HepG2 (cell line): ENCODE measurements at regions of chr4 and their contacts with region 1.

Region 1: DNA sequence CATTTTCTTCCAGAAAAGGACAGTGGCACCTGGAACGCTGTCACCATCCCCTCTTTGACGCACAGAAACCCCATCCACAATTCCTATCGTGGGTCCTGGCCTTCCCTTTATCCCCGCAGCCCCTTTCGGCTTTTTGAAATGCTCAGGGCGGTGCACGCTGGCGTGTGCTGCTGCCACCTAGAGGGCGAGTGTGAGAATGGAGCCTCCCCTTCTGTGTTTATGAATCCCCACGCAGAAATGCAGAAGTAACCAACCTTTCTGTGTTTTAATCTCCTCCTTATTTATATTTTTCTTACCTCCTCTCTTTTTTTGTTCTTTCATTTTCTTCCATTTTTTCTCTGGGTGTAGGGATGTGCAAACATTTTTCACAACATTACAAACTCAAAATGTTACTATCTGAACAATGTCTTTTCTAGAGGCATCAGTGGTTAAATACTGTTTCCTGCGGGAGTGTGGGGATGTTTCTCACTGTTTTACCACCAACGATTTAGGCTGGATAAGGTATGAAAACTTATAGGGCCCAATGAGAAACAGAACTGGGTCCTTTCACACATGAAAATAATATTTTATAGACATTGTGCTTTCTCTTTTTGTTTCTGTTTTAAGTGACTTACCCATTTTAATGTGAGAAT is 50.0 kb downstream of the TMA16 start:
- DNase-seq: peak; percentile 22
- ATAC-seq: peak; percentile 90
- H3K4me3 ChIP-seq: no peak overlapping the region
- H3K27ac ChIP-seq: no peak overlapping the region
- H3K4me1 ChIP-seq: no peaks in the 10 kb centered on the region
- H3K27me3 ChIP-seq: no peaks in the 10 kb centered on the region
- CTCF ChIP-seq: peak; percentile 86
- EP300 ChIP-seq: no peak
- POLR2A ChIP-seq: no peak
- RAD21 ChIP-seq: peak; percentile 34; the same call in 1 of the 2 replicates

Region 2: GRCh38 chr4:163048447-163048846 is 496.1 kb before region 1 on chr4:
- CTCF ChIA-PET with region 1: no interaction called
- POLR2A ChIA-PET with region 1: no interaction called
- in situ Hi-C with region 1: no loop called
- intact Hi-C with region 1: loop called (anchors 5 kb)
- DNase-seq: peak; percentile 21
- ATAC-seq: peak; percentile 79
- H3K4me3 ChIP-seq: no peak overlapping the region
- H3K27ac ChIP-seq: no peak overlapping the region
- H3K4me1 ChIP-seq: no peaks in the 10 kb centered on the region
- H3K27me3 ChIP-seq: no peaks in the 10 kb centered on the region
- CTCF ChIP-seq: peak; percentile 47
- EP300 ChIP-seq: no peak
- POLR2A ChIP-seq: no peak
- RAD21 ChIP-seq: no peak

Region 3: GRCh38 chr4:163484906-163485305 is 59.6 kb before region 1 on chr4:
- CTCF ChIA-PET with region 1: interaction called, 19 read pairs
- POLR2A ChIA-PET with region 1: no interaction called
- in situ Hi-C with region 1: loop called (anchors 5 kb)
- intact Hi-C with region 1: loop called (anchors 1 kb)
- DNase-seq: peak; percentile 41
- ATAC-seq: peak; percentile 81
- H3K4me3 ChIP-seq: no peak overlapping the region
- H3K27ac ChIP-seq: no peak overlapping the region
- H3K4me1 ChIP-seq: no peaks in the 10 kb centered on the region
- H3K27me3 ChIP-seq: no peaks in the 10 kb centered on the region
- CTCF ChIP-seq: peak; percentile 76
- EP300 ChIP-seq: no peak
- POLR2A ChIP-seq: no peak
- RAD21 ChIP-seq: peak; percentile 50; the same call in 1 of the 2 replicates

Region 4: GRCh38 chr4:163494360-163495162 is 50.0 kb before region 1 on chr4 and contains the start of gene TMA16:
- CTCF ChIA-PET with region 1: no interaction called
- POLR2A ChIA-PET with region 1: interaction called, 7 read pairs
- in situ Hi-C with region 1: no loop called
- intact Hi-C with region 1: loop called (anchors 2 kb)
- DNase-seq: peak; percentile 92
- ATAC-seq: peak; percentile 97
- H3K4me3 ChIP-seq: peak within 1 kb of the TSS; percentile 63 to 98 (median 94)
- H3K27ac ChIP-seq: peak within 1 kb of the TSS; percentile 99
- H3K4me1 ChIP-seq: peaks cover 22% of the 10 kb centered on the region
- H3K27me3 ChIP-seq: peaks cover 0 to 4% of the 10 kb centered on the region in 2 experiments; a peak in 1 of 5 replicates
- CTCF ChIP-seq: peak; percentile 35
- EP300 ChIP-seq: peak in 1 of 2 experiments; percentile 64; a peak in 2 of 4 replicates
- POLR2A ChIP-seq: peak; percentile 82 to 90
- RAD21 ChIP-seq: peak; percentile 23; the same call in 1 of the 2 replicates
- total RNA-seq, gene TMA16: 52.5 and 69.0 TPM in 2 replicates

Region 5: DNA sequence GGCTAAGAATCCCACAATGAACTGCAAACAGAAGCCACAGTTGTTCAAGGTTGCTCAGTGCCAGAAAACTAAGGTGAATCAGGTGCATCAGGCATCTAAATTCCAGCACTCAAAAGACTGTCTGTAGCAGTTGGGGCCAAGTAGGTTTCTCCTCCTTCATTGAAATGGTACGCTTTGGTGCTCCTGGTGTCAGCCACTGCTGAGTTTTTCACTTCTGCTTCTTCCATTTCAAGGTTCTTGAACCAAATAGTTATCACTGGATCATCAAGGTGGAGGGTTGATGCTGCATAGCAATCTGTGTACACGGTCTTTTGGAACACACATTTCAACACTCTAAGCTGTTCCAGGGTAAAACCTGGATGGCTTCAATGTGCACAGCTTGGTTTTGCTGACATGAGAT is 24.3 kb after region 1 on chr4:
- CTCF ChIA-PET with region 1: no interaction called
- POLR2A ChIA-PET with region 1: no interaction called
- in situ Hi-C with region 1: no loop called
- intact Hi-C with region 1: no loop called
- DNase-seq: no peak
- ATAC-seq: no peak
- H3K4me3 ChIP-seq: no peak overlapping the region
- H3K27ac ChIP-seq: no peak overlapping the region
- H3K4me1 ChIP-seq: peaks cover 18% of the 10 kb centered on the region
- H3K27me3 ChIP-seq: no peaks in the 10 kb centered on the region
- CTCF ChIP-seq: no peak
- EP300 ChIP-seq: no peak
- POLR2A ChIP-seq: no peak
- RAD21 ChIP-seq: no peak

Region 6: DNA sequence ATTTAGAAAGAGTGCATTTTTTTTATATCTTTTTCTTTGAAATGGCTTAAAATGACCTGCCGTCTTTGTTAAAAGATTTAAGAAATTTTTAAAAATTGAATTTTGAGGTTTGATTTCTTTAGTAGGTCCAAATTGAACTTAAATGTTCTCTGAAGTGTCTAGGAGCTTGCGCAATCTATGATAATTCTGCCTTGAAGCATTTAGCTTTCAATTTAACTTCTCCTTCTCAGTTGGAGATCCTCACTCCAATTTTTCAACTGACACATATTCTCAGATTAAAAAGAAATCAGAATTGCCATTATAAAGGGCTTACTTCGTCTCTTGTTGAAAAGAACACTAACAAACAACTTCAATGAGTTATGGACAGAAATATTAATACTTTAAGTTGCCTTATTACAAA is 223.5 kb after region 1 on chr4:
- CTCF ChIA-PET with region 1: no interaction called
- POLR2A ChIA-PET with region 1: no interaction called
- in situ Hi-C with region 1: no loop called
- intact Hi-C with region 1: no loop called
- DNase-seq: no peak
- ATAC-seq: no peak
- H3K4me3 ChIP-seq: no peak overlapping the region
- H3K27ac ChIP-seq: no peak overlapping the region
- H3K4me1 ChIP-seq: no peaks in the 10 kb centered on the region
- H3K27me3 ChIP-seq: no peaks in the 10 kb centered on the region
- CTCF ChIP-seq: no peak
- EP300 ChIP-seq: no peak
- POLR2A ChIP-seq: no peak
- RAD21 ChIP-seq: no peak

Region 7: GRCh38 chr4:164012396-164013027 is 468.0 kb after region 1 on chr4:
- CTCF ChIA-PET with region 1: no interaction called
- POLR2A ChIA-PET with region 1: no interaction called
- in situ Hi-C with region 1: loop called (anchors 10 kb)
- intact Hi-C with region 1: no loop called
- DNase-seq: peak; percentile 28
- ATAC-seq: peak; percentile 98
- H3K4me3 ChIP-seq: no peak overlapping the region
- H3K27ac ChIP-seq: no peak overlapping the region
- H3K4me1 ChIP-seq: no peaks in the 10 kb centered on the region
- H3K27me3 ChIP-seq: no peaks in the 10 kb centered on the region
- CTCF ChIP-seq: peak; percentile 75
- EP300 ChIP-seq: no peak
- POLR2A ChIP-seq: no peak
- RAD21 ChIP-seq: peak; percentile 42; the same call in 1 of the 2 replicates